Right cardiac atrium (tissue), 5 donors: ENCODE measurements at regions of chr1 and their contacts with region 1.

Region 1: DNA sequence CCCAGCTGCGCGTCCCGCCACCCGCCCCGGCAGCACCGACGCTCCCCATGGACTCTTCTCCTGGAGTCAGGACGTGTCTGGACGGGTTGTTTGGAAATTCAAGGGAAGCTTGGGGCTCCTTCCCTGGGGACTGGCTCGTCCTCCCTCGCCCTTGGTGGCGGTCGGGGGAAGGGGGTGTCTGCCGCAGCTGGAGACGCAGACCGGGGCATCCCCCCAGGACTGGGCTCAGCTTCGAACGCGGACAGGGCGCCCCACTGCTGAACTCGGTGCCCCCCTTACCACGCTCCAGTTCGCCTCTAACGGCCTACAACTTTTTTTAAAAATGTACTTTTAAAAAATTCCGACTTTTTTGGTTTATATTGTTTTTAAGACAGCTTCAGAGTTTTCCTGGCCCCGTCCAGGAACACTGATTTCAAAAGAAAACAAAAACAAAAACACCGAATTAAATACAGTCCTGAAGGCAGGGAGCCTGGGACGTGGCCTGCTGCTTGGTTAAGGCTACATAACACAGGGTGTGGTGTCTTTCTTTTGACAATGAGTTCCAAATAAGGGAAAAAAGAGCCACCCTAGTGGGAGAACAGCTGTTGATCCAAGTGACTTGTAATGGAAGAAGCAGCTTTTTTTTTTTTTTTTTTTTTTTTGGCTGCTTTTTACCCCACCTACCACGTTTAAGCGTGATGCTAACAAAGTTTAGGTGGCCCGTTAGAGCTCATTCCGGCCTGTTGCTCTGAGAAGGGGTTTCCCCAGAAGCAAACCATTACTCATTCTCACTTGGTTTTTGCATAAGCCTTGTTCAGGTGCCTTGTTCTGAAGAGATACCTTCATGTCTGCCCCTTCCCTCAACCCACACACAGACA is 862 bp upstream of the DIPK1A start:
- DNase-seq: peak in 2 of 3 donors; percentile 32 to 71
- ATAC-seq: peak; percentile 40 to 79
- H3K4me3 ChIP-seq: peak overlapping the region; percentile 68
- H3K27ac ChIP-seq: peak overlapping the region; percentile 93
- H3K4me1 ChIP-seq: no peaks in the 10 kb centered on the region
- H3K27me3 ChIP-seq: no peaks in the 10 kb centered on the region

Region 2: DNA sequence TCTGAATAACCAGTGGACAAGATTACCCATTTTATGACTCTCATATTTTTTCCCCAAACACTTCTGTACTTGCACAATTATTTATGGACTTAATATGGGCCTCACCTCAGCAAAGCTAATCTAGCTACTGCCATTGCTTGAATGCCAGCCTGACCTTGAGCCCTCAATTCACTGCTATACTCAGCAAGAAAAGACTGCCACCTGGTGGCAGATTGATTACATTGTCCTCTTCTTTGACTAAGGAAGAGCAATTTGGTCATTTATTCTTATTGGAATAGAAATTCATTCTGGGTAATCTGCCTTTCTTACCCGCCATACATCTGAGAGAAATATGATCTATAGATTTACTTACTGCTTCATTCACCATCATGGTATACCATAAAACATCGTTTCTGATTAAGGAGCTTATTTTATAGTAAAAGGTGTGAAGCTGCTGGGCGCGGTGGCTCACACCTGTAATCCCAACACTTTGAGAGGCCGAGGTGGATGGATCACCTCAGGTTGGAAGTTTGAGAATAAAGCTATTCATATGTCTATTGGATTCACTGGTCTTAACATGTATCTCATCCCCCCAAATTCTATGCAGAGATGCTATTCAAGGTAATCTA is 32.1 kb after region 1 on chr1:
- intact Hi-C with region 1: loop called in 1 of 4 experiments (anchors 2 kb)
- DNase-seq: peak in 2 of 3 donors; percentile 37 to 48
- ATAC-seq: peak; percentile 88 to 89
- H3K4me3 ChIP-seq: no peak overlapping the region
- H3K27ac ChIP-seq: no peak overlapping the region
- H3K4me1 ChIP-seq: no peaks in the 10 kb centered on the region
- H3K27me3 ChIP-seq: no peaks in the 10 kb centered on the region

Region 3: GRCh38 chr1:93061895-93062792 is 100.0 kb after region 1 on chr1:
- intact Hi-C with region 1: no loop called
- DNase-seq: no peak
- ATAC-seq: peak; percentile 41 to 46
- H3K4me3 ChIP-seq: no peak overlapping the region
- H3K27ac ChIP-seq: no peak overlapping the region
- H3K4me1 ChIP-seq: no peaks in the 10 kb centered on the region
- H3K27me3 ChIP-seq: no peaks in the 10 kb centered on the region